ENCODE measurements at regions of chr16 and their contacts with region 1.

Region 1: GRCh38 chr16:13940397-13940933 is 20.5 kb downstream of the ERCC4 start:
- DNase-seq: no peak
- ATAC-seq: no peak
- H3K4me3 ChIP-seq: no peak overlapping the region
- H3K27ac ChIP-seq: no peak overlapping the region
- H3K4me1 ChIP-seq: peaks cover 0 to 21% (median 9%) of the 10 kb centered on the region in 9 donors
- H3K27me3 ChIP-seq: no peaks in the 10 kb centered on the region
- CTCF ChIP-seq: no peak

Region 2: GRCh38 chr16:13839577-13839976 is 100.9 kb before region 1 on chr16:
- intact Hi-C with region 1: no loop called
- DNase-seq: no peak
- ATAC-seq: no peak
- H3K4me3 ChIP-seq: no peak overlapping the region
- H3K27ac ChIP-seq: no peak overlapping the region
- H3K4me1 ChIP-seq: no peaks in the 10 kb centered on the region
- H3K27me3 ChIP-seq: peaks cover 0 to 19% (median 0%) of the 10 kb centered on the region in 7 donors
- CTCF ChIP-seq: no peak

Region 3: GRCh38 chr16:13984794-13985193 is 44.3 kb after region 1 on chr16:
- intact Hi-C with region 1: loop called in 2 of 10 experiments (anchors 5 kb)
- DNase-seq: no peak
- ATAC-seq: no peak
- H3K4me3 ChIP-seq: no peak overlapping the region
- H3K27ac ChIP-seq: no peak overlapping the region
- H3K4me1 ChIP-seq: peaks cover 0 to 6% (median 0%) of the 10 kb centered on the region in 9 donors
- H3K27me3 ChIP-seq: no peaks in the 10 kb centered on the region
- CTCF ChIP-seq: no peak

Measured in heart right ventricle (tissue), 16 donors.